ENCODE measurements at regions of chr22 and their contacts with region 1.

Region 1: GRCh38 chr22:29040385-29041275 is 21.0 kb downstream of the C22orf31 start:
- DNase-seq: peak; percentile 83
- H3K4me3 ChIP-seq: no peak overlapping the region
- H3K27ac ChIP-seq: no peak overlapping the region
- H3K4me1 ChIP-seq: peaks cover 28% of the 10 kb centered on the region
- H3K27me3 ChIP-seq: no peaks in the 10 kb centered on the region
- CTCF ChIP-seq: peak; percentile 89 to 96
- POLR2A ChIP-seq: no peak

Region 2: DNA sequence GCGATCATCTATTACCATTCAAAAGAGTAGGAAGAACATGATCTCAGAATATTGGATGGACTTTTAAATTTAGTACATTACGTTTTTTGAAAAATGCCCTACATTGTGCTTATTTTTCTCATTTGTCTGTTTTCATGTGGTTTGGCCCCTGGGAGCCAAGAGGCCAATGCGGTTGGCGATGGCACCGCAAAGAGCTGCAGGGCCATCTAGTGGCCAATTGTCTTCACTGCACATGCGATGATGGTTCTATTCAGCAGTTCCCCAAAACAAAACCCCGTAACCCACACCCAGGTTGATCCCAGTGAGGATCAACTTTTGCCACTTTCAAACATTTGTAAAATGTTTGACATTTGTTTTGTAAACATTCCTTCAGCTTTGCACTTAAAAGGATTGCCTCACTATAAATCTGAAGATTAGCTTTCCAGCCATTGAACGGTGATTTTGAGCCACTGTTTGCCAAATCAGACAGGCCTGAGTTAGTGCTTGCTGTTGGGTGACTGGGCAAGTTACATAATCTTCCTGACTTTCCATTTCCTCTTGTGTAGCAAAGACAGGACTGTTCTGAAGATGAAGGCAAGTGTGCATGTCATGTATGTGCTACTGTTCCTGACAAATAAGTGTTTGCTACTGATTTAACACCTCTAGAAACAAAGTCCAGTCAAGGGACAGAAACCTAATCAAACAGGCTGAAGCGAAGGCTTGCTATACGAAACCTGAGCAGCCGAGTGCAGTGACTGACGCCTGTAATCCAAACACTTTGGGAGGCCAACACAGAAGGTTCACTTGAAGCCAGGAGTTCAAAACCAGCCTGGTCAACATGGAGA is 211.1 kb before region 1 on chr22:
- CTCF ChIA-PET with region 1: interaction called, 76 read pairs
- POLR2A ChIA-PET with region 1: no interaction called
- dilution Hi-C with region 1: no loop called
- intact Hi-C with region 1: loop called (anchors 1 kb)
- DNase-seq: peak; percentile 72
- H3K4me3 ChIP-seq: no peak overlapping the region
- H3K27ac ChIP-seq: no peak overlapping the region
- H3K4me1 ChIP-seq: no peaks in the 10 kb centered on the region
- H3K27me3 ChIP-seq: no peaks in the 10 kb centered on the region
- CTCF ChIP-seq: peak; percentile 90 to 97
- POLR2A ChIP-seq: no peak

Region 3: DNA sequence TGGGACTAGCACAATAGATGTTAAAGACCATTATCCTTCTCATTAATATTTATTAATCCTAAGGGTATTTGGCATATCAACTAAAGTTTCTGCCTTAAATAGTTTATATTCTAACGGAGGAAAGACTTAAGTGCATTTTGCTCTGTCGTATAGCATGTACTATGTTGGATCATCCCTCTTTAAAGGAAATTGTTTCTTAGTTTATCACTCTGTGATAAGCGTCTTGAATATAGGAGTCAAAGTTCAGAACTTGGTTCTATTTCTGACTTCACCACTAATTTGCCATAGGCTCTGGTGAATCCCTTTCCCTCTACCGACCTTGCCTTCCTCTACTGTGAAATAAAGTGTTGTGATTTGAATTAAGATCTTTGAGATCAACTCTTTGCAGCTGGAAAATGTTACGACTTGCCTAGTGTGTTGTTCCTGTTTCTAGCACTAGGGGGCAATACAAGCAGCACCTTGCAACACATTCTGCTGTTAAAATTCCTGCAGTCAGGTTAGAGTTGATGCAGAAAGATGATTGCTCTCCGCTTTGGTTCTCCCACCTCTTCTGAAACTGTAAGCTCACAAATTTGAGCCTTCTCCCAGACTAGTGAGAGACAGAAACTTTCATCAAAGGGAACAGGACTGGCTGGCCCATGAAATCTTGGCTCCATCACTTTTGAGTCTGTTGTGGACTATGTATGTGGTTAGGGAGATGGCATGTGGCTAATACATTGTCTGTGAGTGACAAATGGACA is 185.1 kb before region 1 on chr22:
- CTCF ChIA-PET with region 1: interaction called, 256 read pairs
- POLR2A ChIA-PET with region 1: no interaction called
- dilution Hi-C with region 1: no loop called
- intact Hi-C with region 1: loop called (anchors 1 kb)
- DNase-seq: peak; percentile 80
- H3K4me3 ChIP-seq: no peak overlapping the region
- H3K27ac ChIP-seq: no peak overlapping the region
- H3K4me1 ChIP-seq: no peaks in the 10 kb centered on the region
- H3K27me3 ChIP-seq: no peaks in the 10 kb centered on the region
- CTCF ChIP-seq: peak; percentile 74 to 79
- POLR2A ChIP-seq: no peak

Region 4: DNA sequence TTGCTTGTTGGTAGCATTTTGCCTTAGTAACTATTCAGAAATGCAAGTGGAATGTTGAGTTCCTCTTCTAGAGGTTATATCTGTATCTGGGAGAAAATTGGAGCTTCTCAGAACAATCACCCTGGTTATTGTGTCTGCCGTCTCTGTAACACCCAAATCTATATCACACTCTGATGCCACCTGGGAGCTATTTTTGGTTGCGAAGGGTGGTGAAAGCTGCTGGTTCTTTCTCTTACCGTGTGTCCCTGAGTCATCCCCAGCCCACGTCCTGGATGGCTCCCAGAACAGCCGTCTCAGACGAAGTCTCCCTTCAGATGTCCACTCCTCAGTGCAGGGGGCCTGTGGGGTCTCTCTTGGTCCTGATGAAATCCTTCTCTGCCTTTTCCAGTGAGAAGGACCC is 62.5 kb before region 1 on chr22:
- CTCF ChIA-PET with region 1: interaction called, 16 read pairs
- POLR2A ChIA-PET with region 1: no interaction called
- dilution Hi-C with region 1: no loop called
- intact Hi-C with region 1: no loop called
- DNase-seq: no peak
- H3K4me3 ChIP-seq: no peak overlapping the region
- H3K27ac ChIP-seq: no peak overlapping the region
- H3K4me1 ChIP-seq: peaks cover 27% of the 10 kb centered on the region
- H3K27me3 ChIP-seq: no peaks in the 10 kb centered on the region
- CTCF ChIP-seq: no peak
- POLR2A ChIP-seq: no peak

Region 5: DNA sequence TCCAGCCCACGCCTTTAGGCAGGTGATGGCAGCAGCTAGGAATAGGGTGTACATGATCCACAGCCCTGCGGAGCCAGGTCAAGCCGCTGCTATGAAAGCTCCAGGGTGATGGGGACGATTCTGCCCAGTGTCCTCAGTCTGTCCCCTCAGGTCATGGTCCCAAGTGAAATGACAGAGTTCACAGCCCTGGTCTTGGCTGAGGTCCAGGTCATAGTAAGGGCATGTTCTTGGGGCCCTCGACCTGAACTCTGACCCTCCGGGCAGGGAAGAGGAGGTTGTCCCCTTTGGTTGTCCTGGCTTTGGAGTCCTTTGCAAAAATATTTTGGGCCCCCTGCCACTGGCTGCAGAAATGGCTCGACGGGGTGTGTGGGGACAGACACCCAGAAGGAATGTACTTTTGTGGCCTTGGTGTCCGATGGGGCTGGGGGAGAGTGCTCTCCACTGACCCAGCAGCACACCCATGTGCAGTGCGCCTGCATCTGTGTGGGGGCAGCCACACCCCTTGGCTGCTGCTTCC is 13.7 kb after region 1 on chr22:
- CTCF ChIA-PET with region 1: interaction called, 12 read pairs
- POLR2A ChIA-PET with region 1: no interaction called
- dilution Hi-C with region 1: no loop called
- intact Hi-C with region 1: no loop called
- DNase-seq: no peak
- H3K4me3 ChIP-seq: no peak overlapping the region
- H3K27ac ChIP-seq: no peak overlapping the region
- H3K4me1 ChIP-seq: no peaks in the 10 kb centered on the region
- H3K27me3 ChIP-seq: no peaks in the 10 kb centered on the region
- CTCF ChIP-seq: no peak
- POLR2A ChIP-seq: no peak

Region 6: GRCh38 chr22:29245637-29246385 is 205.2 kb after region 1 on chr22:
- CTCF ChIA-PET with region 1: interaction called, 30 read pairs
- POLR2A ChIA-PET with region 1: interaction called, 3 read pairs
- dilution Hi-C with region 1: no loop called
- intact Hi-C with region 1: loop called (anchors 1 kb)
- DNase-seq: peak; percentile 58
- H3K4me3 ChIP-seq: no peak overlapping the region
- H3K27ac ChIP-seq: no peak overlapping the region
- H3K4me1 ChIP-seq: no peaks in the 10 kb centered on the region
- H3K27me3 ChIP-seq: peaks cover 3 to 5% of the 10 kb centered on the region in 2 experiments
- CTCF ChIP-seq: peak; percentile 91 to 97
- POLR2A ChIP-seq: no peak

Measured in endothelial cell of umbilical vein (primary cell).